Activated B cell treated with CpG ODN at 0.5 μM for 24 hours (primary cell): ENCODE measurements at regions of chr15 and their contacts with region 1.

Region 1: GRCh38 chr15:68550481-68551295 is 28.1 kb upstream of the CORO2B start:
- DNase-seq: peak; percentile 68
- ATAC-seq: peak; percentile 67
- H3K4me3 Mint-ChIP-seq: no peak overlapping the region
- H3K27ac Mint-ChIP-seq: no peak overlapping the region
- H3K4me1 Mint-ChIP-seq: no peaks in the 10 kb centered on the region
- H3K27me3 Mint-ChIP-seq: peaks cover 22% of the 10 kb centered on the region
- CTCF ChIP-seq: peak; percentile 65

Region 2: DNA sequence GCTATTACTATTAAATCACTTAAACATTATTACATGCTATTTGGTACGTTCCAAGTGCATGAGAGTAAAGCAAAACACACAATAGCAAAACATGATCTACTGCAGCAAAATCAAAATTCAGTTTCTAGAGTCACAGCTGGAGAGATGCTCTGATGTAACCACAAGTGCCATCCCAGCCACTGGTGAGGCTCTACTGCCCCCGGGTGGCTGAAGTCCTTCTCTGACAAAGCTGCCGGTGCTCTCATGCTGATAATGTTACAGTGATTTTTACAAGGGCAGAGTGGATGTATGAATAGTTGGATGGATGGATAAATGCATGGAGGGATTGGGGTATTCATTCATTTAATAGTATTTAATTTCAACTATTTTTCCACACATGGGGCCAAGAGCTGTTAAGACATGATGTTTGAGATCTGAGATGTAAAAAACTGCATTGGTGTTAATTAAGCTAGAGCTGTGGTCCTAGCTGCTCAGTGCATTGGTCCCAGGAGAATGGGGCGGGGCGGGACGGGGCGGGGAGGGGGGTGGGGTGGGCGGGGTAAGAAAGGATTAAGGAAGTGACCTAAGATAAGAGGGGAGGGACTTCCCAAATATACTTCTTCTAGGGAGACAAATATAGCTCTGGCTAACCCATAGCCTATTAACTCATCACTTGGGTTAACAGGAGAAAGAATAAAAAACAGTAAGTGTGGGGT is 374.3 kb after region 1 on chr15:
- CTCF ChIA-PET with region 1: interaction called, 29 read pairs
- POLR2A ChIA-PET with region 1: no interaction called
- intact Hi-C with region 1: loop called (anchors 1 kb)
- DNase-seq: peak; percentile 32
- ATAC-seq: peak; percentile 69
- H3K4me3 Mint-ChIP-seq: no peak overlapping the region
- H3K27ac Mint-ChIP-seq: no peak overlapping the region
- H3K4me1 Mint-ChIP-seq: peaks cover 2% of the 10 kb centered on the region
- H3K27me3 Mint-ChIP-seq: peaks cover 8% of the 10 kb centered on the region
- CTCF ChIP-seq: no peak